ENCODE measurements at regions of chr1 and their contacts with region 1.

Region 1: GRCh38 chr1:8878448-8879347 is at the start of gene ENO1:
- DNase-seq: peak; percentile 89
- ATAC-seq: peak; percentile 84
- H3K4me3 ChIP-seq: peak within 1 kb of the TSS; percentile 70 to 93 (median 93)
- H3K27ac ChIP-seq: peak within 1 kb of the TSS; percentile 90
- H3K4me1 ChIP-seq: peaks cover 46% of the 10 kb centered on the region
- H3K27me3 ChIP-seq: peaks cover 0 to 2% of the 10 kb centered on the region in 2 experiments; a peak in 2 of 5 replicates
- CTCF ChIP-seq: no peak
- EP300 ChIP-seq: peak; percentile 10 to 55; a peak in 3 of 4 replicates
- POLR2A ChIP-seq: peak; percentile 97
- RAD21 ChIP-seq: peak; percentile 57
- total RNA-seq, gene ENO1: 1,559 and 2,216 TPM in 2 replicates

Region 2: GRCh38 chr1:8889925-8890785 is 11.5 kb after region 1 on chr1:
- CTCF ChIA-PET with region 1: no interaction called
- POLR2A ChIA-PET with region 1: interaction called, 23 read pairs
- in situ Hi-C with region 1: no loop called
- intact Hi-C with region 1: no loop called
- DNase-seq: no peak
- ATAC-seq: peak; percentile 71
- H3K4me3 ChIP-seq: peak overlapping the region; percentile 42 to 73 (median 59)
- H3K27ac ChIP-seq: no peak overlapping the region
- H3K4me1 ChIP-seq: peaks cover 59% of the 10 kb centered on the region
- H3K27me3 ChIP-seq: no peaks in the 10 kb centered on the region
- CTCF ChIP-seq: no peak
- EP300 ChIP-seq: no peak
- POLR2A ChIP-seq: no peak
- RAD21 ChIP-seq: no peak

Region 3: GRCh38 chr1:8899076-8899475 is 20.4 kb after region 1 on chr1:
- CTCF ChIA-PET with region 1: no interaction called
- POLR2A ChIA-PET with region 1: interaction called, 20 read pairs
- in situ Hi-C with region 1: no loop called
- intact Hi-C with region 1: no loop called
- DNase-seq: no peak
- ATAC-seq: no peak
- H3K4me3 ChIP-seq: no peak overlapping the region
- H3K27ac ChIP-seq: no peak overlapping the region
- H3K4me1 ChIP-seq: peaks cover 60% of the 10 kb centered on the region
- H3K27me3 ChIP-seq: no peaks in the 10 kb centered on the region
- CTCF ChIP-seq: no peak
- EP300 ChIP-seq: no peak
- POLR2A ChIP-seq: no peak
- RAD21 ChIP-seq: no peak

Region 4: GRCh38 chr1:8908388-8909151 is 29.9 kb after region 1 on chr1:
- CTCF ChIA-PET with region 1: no interaction called
- POLR2A ChIA-PET with region 1: interaction called, 28 read pairs
- in situ Hi-C with region 1: no loop called
- intact Hi-C with region 1: no loop called
- DNase-seq: no peak
- ATAC-seq: peak; percentile 25; the same call in 1 of the 3 replicates
- H3K4me3 ChIP-seq: peak overlapping the region; percentile 44 to 56 (median 54)
- H3K27ac ChIP-seq: no peak overlapping the region
- H3K4me1 ChIP-seq: peaks cover 54% of the 10 kb centered on the region
- H3K27me3 ChIP-seq: no peaks in the 10 kb centered on the region
- CTCF ChIP-seq: no peak
- EP300 ChIP-seq: no peak
- POLR2A ChIP-seq: no peak
- RAD21 ChIP-seq: no peak